CD8-positive, alpha-beta T cell (primary cell): ENCODE measurements at regions of chr15 and their contacts with region 1.

Region 1: GRCh38 chr15:98523912-98524662 is 124.3 kb upstream of the IGF1R start:
- DNase-seq: no peak
- ATAC-seq: no peak
- H3K4me3 ChIP-seq: no peak overlapping the region
- H3K4me3 Mint-ChIP-seq: no peak overlapping the region
- H3K27ac ChIP-seq: no peak overlapping the region
- H3K27ac Mint-ChIP-seq: no peak overlapping the region
- H3K4me1 ChIP-seq: no peaks in the 10 kb centered on the region
- H3K4me1 Mint-ChIP-seq: no peaks in the 10 kb centered on the region
- H3K27me3 ChIP-seq: no peaks in the 10 kb centered on the region
- H3K27me3 Mint-ChIP-seq: peaks cover 4% of the 10 kb centered on the region
- CTCF ChIP-seq: no peak

Region 2: DNA sequence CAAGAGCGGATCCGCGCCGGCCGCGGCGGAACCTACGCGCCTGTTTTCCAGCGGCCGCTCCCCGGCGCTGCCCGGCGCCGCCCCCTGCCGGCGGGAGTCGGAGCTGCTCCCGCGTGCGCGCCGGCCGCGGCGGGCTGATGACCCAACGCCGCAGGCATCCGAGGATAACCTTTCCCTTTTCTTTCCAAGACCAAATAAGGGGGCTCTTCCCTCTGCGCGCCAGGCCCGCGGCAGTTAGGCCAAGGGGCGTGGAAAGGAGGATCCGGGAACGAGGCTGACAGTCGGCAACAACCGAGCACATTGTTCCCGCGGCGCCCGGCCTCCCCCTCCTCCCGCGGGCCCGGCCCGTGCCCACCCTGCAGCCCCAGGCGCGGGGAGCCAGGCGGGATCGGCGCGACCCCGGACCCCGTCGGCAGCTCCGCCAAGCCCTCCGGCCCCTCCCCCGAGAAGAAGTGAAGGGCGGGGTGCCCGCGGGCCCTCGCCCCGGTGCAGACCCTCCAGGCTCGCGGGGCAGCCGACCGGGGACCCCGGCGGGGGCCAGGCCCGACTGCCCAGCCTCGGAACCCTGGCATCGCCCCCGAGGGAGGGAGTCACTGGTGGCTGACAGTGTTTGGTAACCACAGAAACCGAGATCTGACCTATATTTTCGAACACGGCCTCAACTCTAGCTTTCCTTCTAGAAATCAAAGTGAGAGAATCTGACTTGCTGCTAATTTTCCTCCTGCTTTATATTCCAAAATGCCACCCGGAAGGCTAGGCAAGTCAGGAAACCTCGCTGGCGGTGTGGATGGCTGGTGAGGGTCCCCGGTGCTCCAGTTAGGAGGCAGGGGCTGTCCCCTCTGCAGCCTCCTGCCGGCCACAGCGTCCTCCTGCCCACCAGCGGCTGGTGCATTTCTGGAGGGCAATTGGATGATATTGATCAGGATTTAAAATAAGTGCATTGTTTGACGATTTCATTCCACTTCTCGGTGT is 535.2 kb after region 1 on chr15:
- CTCF ChIA-PET with region 1: interaction called, 7 read pairs
- POLR2A ChIA-PET with region 1: no interaction called
- intact Hi-C with region 1: loop called (anchors 5 kb)
- DNase-seq: peak in 8 of 9 experiments; percentile 3 to 65 (median 34)
- ATAC-seq: peak; percentile 69
- H3K4me3 ChIP-seq: peak overlapping the region; percentile 36 to 49
- H3K4me3 Mint-ChIP-seq: peak overlapping the region; percentile 65
- H3K27ac ChIP-seq: no peak overlapping the region
- H3K27ac Mint-ChIP-seq: no peak overlapping the region
- H3K4me1 ChIP-seq: no peaks in the 10 kb centered on the region
- H3K4me1 Mint-ChIP-seq: peaks cover 12% of the 10 kb centered on the region
- H3K27me3 ChIP-seq: peaks cover 10 to 20% of the 10 kb centered on the region in 2 experiments
- H3K27me3 Mint-ChIP-seq: peaks cover 55% of the 10 kb centered on the region
- CTCF ChIP-seq: peak; percentile 61